MCF 10A (cell line): ENCODE measurements at regions of chr3 and their contacts with region 1.

Region 1: DNA sequence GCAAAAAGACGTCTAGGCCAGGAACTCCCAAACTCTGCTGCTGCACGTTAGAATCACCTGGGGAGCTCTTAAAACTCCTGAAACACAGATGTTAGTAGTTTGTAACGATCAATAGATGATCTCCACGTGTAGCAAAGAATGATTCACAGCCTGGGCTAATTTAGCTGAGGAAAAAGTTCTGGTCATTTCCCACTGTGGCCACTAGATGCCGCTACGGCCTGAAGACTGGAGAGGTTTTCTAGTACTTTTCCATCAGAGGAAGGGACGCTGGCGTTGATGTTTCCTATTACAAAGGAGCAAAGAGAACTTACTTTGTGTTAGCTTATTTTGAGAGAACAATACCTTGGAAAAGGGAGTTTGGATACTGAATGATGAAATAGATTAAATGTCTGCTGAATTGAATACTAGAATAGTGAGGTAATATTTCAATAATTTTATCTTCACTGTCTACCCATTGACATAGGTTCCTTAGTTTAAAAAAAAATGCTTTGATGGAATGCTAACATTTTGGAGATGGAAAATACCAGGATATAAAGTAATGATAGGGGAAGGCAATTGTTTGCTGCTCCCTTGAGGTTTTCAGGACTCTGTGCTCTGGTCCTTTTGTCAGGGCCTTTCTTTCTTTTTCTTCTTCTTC is 159.1 kb downstream of the P3H2 start:
- DNase-seq: peak; percentile 88
- H3K4me3 Mint-ChIP-seq: no peak overlapping the region
- H3K27ac Mint-ChIP-seq: no peak overlapping the region
- H3K4me1 Mint-ChIP-seq: peaks cover 7% of the 10 kb centered on the region
- H3K27me3 Mint-ChIP-seq: no peaks in the 10 kb centered on the region
- CTCF ChIP-seq: peak; percentile 91

Region 2: GRCh38 chr3:190012314-190012782 is 50.7 kb after region 1 on chr3:
- CTCF ChIA-PET with region 1: interaction called, 9 read pairs
- POLR2A ChIA-PET with region 1: interaction called, 3 read pairs
- intact Hi-C with region 1: loop called (anchors 2 kb)
- DNase-seq: peak; percentile 61
- H3K4me3 Mint-ChIP-seq: peak overlapping the region; percentile 34
- H3K27ac Mint-ChIP-seq: peak overlapping the region; percentile 64
- H3K4me1 Mint-ChIP-seq: peaks cover 39% of the 10 kb centered on the region
- H3K27me3 Mint-ChIP-seq: no peaks in the 10 kb centered on the region
- CTCF ChIP-seq: no peak

Region 3: GRCh38 chr3:190032924-190033323 is 71.3 kb after region 1 on chr3:
- CTCF ChIA-PET with region 1: interaction called, 8 read pairs
- POLR2A ChIA-PET with region 1: interaction called, 12 read pairs
- intact Hi-C with region 1: no loop called
- DNase-seq: no peak
- H3K4me3 Mint-ChIP-seq: no peak overlapping the region
- H3K27ac Mint-ChIP-seq: peak overlapping the region; percentile 78
- H3K4me1 Mint-ChIP-seq: peaks cover 33% of the 10 kb centered on the region
- H3K27me3 Mint-ChIP-seq: no peaks in the 10 kb centered on the region
- CTCF ChIP-seq: no peak

Region 4: GRCh38 chr3:190205739-190206138 is 244.1 kb after region 1 on chr3:
- CTCF ChIA-PET with region 1: interaction called, 74 read pairs
- POLR2A ChIA-PET with region 1: interaction called, 4 read pairs
- intact Hi-C with region 1: no loop called
- DNase-seq: peak; percentile 44
- H3K4me3 Mint-ChIP-seq: no peak overlapping the region
- H3K27ac Mint-ChIP-seq: peak overlapping the region; percentile 12
- H3K4me1 Mint-ChIP-seq: peaks cover 11% of the 10 kb centered on the region
- H3K27me3 Mint-ChIP-seq: no peaks in the 10 kb centered on the region
- CTCF ChIP-seq: no peak

Region 5: GRCh38 chr3:190424478-190425439 is 463.1 kb after region 1 on chr3:
- CTCF ChIA-PET with region 1: interaction called, 4 read pairs
- POLR2A ChIA-PET with region 1: no interaction called
- intact Hi-C with region 1: loop called (anchors 1 kb)
- DNase-seq: peak; percentile 83
- H3K4me3 Mint-ChIP-seq: no peak overlapping the region
- H3K27ac Mint-ChIP-seq: peak overlapping the region; percentile 71
- H3K4me1 Mint-ChIP-seq: no peaks in the 10 kb centered on the region
- H3K27me3 Mint-ChIP-seq: no peaks in the 10 kb centered on the region
- CTCF ChIP-seq: peak; percentile 64

Region 6: DNA sequence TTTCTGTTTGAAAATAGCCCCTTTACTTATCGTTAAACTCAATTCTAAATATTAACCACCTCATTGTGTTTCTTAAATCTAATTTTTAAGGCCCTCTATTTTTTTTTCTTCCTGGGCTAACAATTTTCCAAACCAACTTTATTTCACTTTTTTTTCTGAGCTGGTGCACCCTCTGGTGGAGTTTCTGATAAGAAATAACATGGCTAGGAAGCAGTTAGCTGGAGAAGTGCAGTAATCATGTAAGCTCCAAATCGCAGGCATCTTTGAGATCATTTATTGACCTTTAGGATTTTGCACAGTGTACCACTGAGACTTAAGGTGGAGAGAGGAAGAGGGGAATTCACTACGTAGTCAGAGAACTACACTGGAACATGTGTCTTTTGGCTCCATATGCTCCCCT is 481.6 kb after region 1 on chr3:
- CTCF ChIA-PET with region 1: interaction called, 7 read pairs
- POLR2A ChIA-PET with region 1: no interaction called
- intact Hi-C with region 1: loop called (anchors 5 kb)
- DNase-seq: peak; percentile 30
- H3K4me3 Mint-ChIP-seq: no peak overlapping the region
- H3K27ac Mint-ChIP-seq: no peak overlapping the region
- H3K4me1 Mint-ChIP-seq: no peaks in the 10 kb centered on the region
- H3K27me3 Mint-ChIP-seq: no peaks in the 10 kb centered on the region
- CTCF ChIP-seq: peak; percentile 36